ENCODE measurements at regions of chr4 and their contacts with region 1.

Region 1: DNA sequence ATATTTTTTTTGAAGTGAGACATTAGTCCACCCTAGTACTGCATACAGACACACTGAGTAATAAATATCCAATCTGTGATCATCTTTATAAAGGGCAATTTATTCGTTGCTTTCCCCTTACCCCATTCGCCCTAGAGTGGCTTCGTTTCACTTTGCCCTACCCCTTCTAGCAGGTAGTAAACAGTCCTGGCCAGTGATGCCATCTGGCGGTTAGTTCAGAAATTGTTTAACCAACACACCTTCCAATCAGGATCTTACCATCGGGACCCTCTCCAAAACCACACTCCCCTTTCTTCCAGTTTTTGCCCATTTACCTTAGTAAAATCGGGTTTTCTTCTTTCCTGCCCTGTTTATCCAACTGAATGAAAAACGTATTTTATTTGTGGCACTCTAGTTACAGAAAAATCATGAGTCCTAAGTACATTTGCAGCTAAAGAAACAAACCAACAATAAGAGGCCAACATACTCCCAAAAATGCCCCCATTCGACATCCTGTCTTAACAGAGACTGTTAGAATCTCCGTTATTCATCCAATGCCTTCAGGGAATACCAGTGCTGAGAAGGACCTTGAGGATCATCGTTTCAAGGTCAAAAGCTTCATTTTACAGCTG is 2.2 kb downstream of the PPA2 start:
- DNase-seq: peak; percentile 83
- ATAC-seq: peak; percentile 49
- H3K4me3 Mint-ChIP-seq: peak overlapping the region; percentile 98
- H3K27ac Mint-ChIP-seq: peak overlapping the region; percentile 80
- H3K4me1 Mint-ChIP-seq: peaks cover 46% of the 10 kb centered on the region
- H3K27me3 Mint-ChIP-seq: no peaks in the 10 kb centered on the region

Region 2: GRCh38 chr4:104966349-104967033 is 505.2 kb before region 1 on chr4:
- CTCF ChIA-PET with region 1: interaction called, 4 read pairs
- POLR2A ChIA-PET with region 1: no interaction called
- intact Hi-C with region 1: loop called (anchors 1 to 5 kb)
- DNase-seq: peak; percentile 61
- ATAC-seq: peak; percentile 97
- H3K4me3 Mint-ChIP-seq: peak overlapping the region; percentile 43
- H3K27ac Mint-ChIP-seq: peak overlapping the region; percentile 98
- H3K4me1 Mint-ChIP-seq: peaks cover 18% of the 10 kb centered on the region
- H3K27me3 Mint-ChIP-seq: peaks cover 5% of the 10 kb centered on the region

Region 3: DNA sequence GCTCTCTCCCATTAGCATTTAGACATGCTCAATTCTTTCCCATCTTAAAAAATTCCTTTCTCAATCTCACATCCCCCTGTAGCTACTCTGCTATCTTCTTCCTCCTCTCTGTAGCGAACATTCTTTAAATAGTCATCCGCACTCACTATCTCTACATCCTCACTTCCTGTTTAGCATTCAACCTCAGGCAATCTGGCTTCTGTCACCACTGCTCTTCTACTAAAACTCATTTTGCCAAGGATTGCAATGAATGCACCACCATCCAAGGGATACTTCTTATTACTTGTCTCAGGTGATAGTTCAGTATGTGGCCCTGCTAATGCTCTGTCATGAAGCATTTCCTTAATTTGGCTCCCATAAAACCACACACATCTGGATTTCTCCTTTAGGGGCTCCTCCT is 335.9 kb before region 1 on chr4:
- CTCF ChIA-PET with region 1: interaction called, 16 read pairs
- POLR2A ChIA-PET with region 1: interaction called, 12 read pairs
- intact Hi-C with region 1: no loop called
- DNase-seq: no peak
- ATAC-seq: no peak
- H3K4me3 Mint-ChIP-seq: no peak overlapping the region
- H3K27ac Mint-ChIP-seq: no peak overlapping the region
- H3K4me1 Mint-ChIP-seq: peaks cover 4% of the 10 kb centered on the region
- H3K27me3 Mint-ChIP-seq: no peaks in the 10 kb centered on the region

Region 4: DNA sequence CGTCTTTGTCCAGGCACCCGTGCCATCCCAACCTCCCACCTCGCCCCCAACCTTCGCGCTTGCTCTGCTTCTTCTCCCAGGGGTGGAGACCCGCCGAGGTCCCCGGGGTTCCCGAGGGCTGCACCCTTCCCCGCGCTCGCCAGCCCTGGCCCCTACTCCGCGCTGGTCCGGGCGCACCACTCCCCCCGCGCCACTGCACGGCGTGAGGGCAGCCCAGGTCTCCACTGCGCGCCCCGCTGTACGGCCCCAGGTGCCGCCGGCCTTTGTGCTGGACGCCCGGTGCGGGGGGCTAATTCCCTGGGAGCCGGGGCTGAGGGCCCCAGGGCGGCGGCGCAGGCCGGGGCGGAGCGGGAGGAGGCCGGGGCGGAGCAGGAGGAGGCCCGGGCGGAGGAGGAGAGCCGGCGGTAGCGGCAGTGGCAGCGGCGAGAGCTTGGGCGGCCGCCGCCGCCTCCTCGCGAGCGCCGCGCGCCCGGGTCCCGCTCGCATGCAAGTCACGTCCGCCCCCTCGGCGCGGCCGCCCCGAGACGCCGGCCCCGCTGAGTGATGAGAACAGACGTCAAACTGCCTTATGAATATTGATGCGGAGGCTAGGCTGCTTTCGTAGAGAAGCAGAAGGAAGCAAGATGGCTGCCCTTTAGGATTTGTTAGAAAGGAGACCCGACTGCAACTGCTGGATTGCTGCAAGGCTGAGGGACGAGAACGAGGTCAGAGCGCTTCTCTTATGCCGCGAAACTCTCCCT is 325.2 kb before region 1 on chr4 and contains the start of gene TET2:
- CTCF ChIA-PET with region 1: interaction called, 16 read pairs
- POLR2A ChIA-PET with region 1: interaction called, 3 read pairs
- intact Hi-C with region 1: loop called (anchors 1 kb)
- DNase-seq: peak; percentile 91
- ATAC-seq: peak; percentile 87
- H3K4me3 Mint-ChIP-seq: peak within 1 kb of the TSS; percentile 97
- H3K27ac Mint-ChIP-seq: peak within 1 kb of the TSS; percentile 98
- H3K4me1 Mint-ChIP-seq: peaks cover 40% of the 10 kb centered on the region
- H3K27me3 Mint-ChIP-seq: no peaks in the 10 kb centered on the region
- total RNA-seq, gene TET2: 35.0 to 40.6 TPM

Region 5: GRCh38 chr4:105289368-105289767 is 182.3 kb before region 1 on chr4:
- CTCF ChIA-PET with region 1: no interaction called
- POLR2A ChIA-PET with region 1: no interaction called
- intact Hi-C with region 1: loop called in 1 of 2 experiments (anchors 5 kb)
- DNase-seq: no peak
- ATAC-seq: no peak
- H3K4me3 Mint-ChIP-seq: no peak overlapping the region
- H3K27ac Mint-ChIP-seq: no peak overlapping the region
- H3K4me1 Mint-ChIP-seq: peaks cover 7% of the 10 kb centered on the region
- H3K27me3 Mint-ChIP-seq: no peaks in the 10 kb centered on the region

Region 6: GRCh38 chr4:105453550-105454205 is 18.0 kb before region 1 on chr4:
- CTCF ChIA-PET with region 1: interaction called, 12 read pairs
- POLR2A ChIA-PET with region 1: interaction called, 10 read pairs
- intact Hi-C with region 1: loop called in 1 of 2 experiments (anchors 1 kb)
- DNase-seq: peak; percentile 60
- ATAC-seq: peak; percentile 99
- H3K4me3 Mint-ChIP-seq: no peak overlapping the region
- H3K27ac Mint-ChIP-seq: peak overlapping the region; percentile 62
- H3K4me1 Mint-ChIP-seq: peaks cover 34% of the 10 kb centered on the region
- H3K27me3 Mint-ChIP-seq: no peaks in the 10 kb centered on the region

Region 7: GRCh38 chr4:105509291-105509690 is 37.6 kb after region 1 on chr4:
- CTCF ChIA-PET with region 1: no interaction called
- POLR2A ChIA-PET with region 1: no interaction called
- intact Hi-C with region 1: no loop called
- DNase-seq: no peak
- ATAC-seq: no peak
- H3K4me3 Mint-ChIP-seq: no peak overlapping the region
- H3K27ac Mint-ChIP-seq: no peak overlapping the region
- H3K4me1 Mint-ChIP-seq: no peaks in the 10 kb centered on the region
- H3K27me3 Mint-ChIP-seq: peaks cover 6% of the 10 kb centered on the region

Region 8: DNA sequence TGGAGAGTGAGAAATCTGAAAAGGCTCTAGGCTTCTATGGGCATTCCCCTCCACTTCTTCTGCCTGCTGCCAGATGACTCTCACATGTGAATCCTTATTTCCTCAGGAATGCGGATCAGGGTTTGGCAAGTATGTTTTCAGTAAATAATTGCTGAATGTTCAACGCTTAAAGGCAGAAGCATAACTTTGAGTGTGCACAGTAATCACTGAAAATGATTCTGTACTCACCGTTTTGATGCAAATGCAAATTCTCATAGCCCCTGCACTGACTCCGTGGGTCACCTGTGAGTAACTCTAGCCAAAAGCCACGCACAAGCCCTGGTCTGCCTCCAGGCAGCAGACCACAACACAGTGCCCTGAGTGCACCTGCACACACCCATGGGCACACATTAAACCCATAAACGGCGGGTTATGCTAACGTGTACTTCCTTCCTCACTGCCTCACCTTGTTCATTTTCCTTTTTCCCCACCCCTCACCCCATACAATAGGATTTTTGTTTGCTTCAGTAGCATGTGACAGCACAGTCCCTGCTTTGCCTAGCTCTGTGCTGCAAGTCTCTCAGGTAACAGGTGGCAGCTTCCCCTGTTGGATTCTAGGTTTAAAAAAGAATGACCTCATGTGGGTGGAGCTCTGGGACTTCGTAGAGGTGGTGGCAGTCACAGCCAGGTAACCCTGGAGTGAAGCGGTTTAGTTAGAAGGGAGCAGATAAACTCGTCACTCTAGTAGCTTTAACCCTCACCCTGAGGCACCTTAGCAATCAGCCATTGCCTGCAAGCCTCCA is 80.5 kb after region 1 on chr4 and contains the start of gene ARHGEF38:
- CTCF ChIA-PET with region 1: no interaction called
- POLR2A ChIA-PET with region 1: no interaction called
- intact Hi-C with region 1: no loop called
- DNase-seq: no peak
- ATAC-seq: no peak
- H3K4me3 Mint-ChIP-seq: no peak within 1 kb of the TSS
- H3K27ac Mint-ChIP-seq: no peak within 1 kb of the TSS
- H3K4me1 Mint-ChIP-seq: no peaks in the 10 kb centered on the region
- H3K27me3 Mint-ChIP-seq: peaks cover 4% of the 10 kb centered on the region
- total RNA-seq, gene ARHGEF38: not detected

Region 9: GRCh38 chr4:106048250-106048971 is 576.7 kb after region 1 on chr4:
- CTCF ChIA-PET with region 1: no interaction called
- POLR2A ChIA-PET with region 1: no interaction called
- intact Hi-C with region 1: no loop called
- DNase-seq: no peak
- ATAC-seq: no peak
- H3K4me3 Mint-ChIP-seq: no peak overlapping the region
- H3K27ac Mint-ChIP-seq: no peak overlapping the region
- H3K4me1 Mint-ChIP-seq: no peaks in the 10 kb centered on the region
- H3K27me3 Mint-ChIP-seq: no peaks in the 10 kb centered on the region